PC-9 (cell line): ENCODE measurements at regions of chr1 and their contacts with region 1.

Region 1: GRCh38 chr1:46401964-46402626 is 8.0 kb downstream of the FAAH start:
- DNase-seq: peak; percentile 67 to 88
- H3K4me3 ChIP-seq: no peak overlapping the region
- H3K27ac ChIP-seq: no peak overlapping the region
- H3K4me1 ChIP-seq: peaks cover 8% of the 10 kb centered on the region; the same call in 1 of the 2 replicates
- H3K27me3 ChIP-seq: no peaks in the 10 kb centered on the region
- CTCF ChIP-seq: no peak

Region 2: DNA sequence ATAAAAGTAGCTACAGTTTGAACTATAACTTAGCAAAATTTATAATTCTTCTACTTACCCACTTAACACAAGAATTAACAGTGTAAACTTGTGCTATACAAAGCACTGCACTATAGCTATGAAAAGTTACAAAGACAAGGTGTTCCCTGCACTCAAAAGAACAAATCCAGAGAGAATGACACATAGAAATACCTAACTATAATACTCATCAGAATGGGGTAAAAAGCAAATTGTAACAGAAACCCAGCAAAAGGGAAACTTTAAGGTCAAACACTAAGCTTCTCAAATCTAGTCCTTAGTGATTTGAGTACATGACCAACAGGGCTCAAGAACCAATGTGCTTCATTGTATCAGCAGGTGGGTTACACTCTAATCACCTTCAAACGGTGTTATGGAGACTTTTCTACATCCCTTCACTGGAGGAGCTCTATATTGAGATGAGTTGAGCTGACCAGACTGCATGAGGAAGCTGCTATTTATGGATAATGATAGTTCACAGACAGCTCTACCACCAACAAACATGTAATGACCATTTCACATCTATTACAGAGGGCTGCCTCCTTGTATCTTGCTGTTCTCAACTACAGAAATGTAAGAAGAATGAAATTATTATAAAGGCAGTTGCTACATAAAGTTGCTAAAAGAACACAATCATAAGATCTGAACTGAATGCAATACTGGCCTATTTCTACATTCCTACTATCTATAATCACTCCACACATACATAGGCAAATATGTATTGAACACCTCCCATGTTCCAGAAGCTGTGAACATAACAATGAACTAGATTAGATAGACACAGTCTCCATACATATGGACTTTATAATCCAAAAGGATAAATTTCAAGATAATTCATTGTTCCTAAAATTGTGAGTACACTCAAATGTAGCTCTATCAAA is 317.3 kb before region 1 on chr1:
- CTCF ChIA-PET with region 1: no interaction called
- POLR2A ChIA-PET with region 1: no interaction called
- intact Hi-C with region 1: no loop called
- DNase-seq: peak in 1 of 2 experiments; percentile 70
- H3K4me3 ChIP-seq: peak overlapping the region; percentile 10; the same call in 1 of the 2 replicates
- H3K27ac ChIP-seq: peak overlapping the region; percentile 91
- H3K4me1 ChIP-seq: peaks cover 50% of the 10 kb centered on the region
- H3K27me3 ChIP-seq: no peaks in the 10 kb centered on the region
- CTCF ChIP-seq: no peak

Region 3: GRCh38 chr1:46352363-46352762 is 49.7 kb before region 1 on chr1:
- CTCF ChIA-PET with region 1: interaction called, 17 read pairs
- POLR2A ChIA-PET with region 1: no interaction called
- intact Hi-C with region 1: no loop called
- DNase-seq: no peak
- H3K4me3 ChIP-seq: no peak overlapping the region
- H3K27ac ChIP-seq: no peak overlapping the region
- H3K4me1 ChIP-seq: 0 out of 2 replicates have a peak, but pooled peaks cover 4% of the 10 kb centered on the region
- H3K27me3 ChIP-seq: no peaks in the 10 kb centered on the region
- CTCF ChIP-seq: no peak

Region 4: DNA sequence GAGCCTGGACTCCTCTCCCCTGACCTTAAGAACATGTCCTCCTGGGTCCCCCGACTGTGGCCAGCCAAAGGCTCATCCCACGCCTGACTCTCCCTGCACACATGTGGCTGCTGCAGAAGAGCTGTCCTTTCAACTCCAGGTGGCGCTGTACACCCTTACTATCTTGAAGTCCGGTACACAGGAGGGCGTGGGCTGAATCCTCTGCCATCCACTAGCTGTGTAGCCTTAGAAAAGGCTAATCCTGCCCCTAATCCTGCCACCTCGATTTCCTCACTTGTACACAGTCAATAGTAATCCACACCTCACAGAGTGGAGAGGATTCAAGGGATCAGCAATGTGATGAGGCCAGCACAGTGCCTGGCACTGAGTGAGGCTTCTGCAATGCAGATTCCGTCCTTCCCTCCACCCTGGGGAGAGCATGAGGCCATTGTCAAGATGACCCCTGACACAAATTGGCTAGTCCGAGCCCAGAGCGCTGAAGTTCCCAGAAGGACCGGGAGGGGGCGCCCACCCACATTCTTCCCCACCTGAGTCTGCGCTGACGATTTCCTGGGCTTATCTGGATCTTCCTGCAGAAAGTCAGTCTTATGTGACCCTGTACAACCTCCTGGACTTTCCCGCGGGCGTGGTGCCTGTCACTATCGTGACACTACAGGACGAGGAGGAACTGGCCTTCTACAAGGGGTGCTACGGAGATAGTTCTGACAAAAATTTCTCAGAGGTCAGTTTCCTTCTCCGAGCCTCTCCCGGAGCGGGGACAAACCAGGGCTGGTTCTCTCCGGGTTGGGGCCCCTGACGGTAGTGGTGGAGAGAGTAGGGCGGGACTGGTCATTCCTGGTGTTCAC is 40.4 kb after region 1 on chr1:
- CTCF ChIA-PET with region 1: interaction called, 3 read pairs
- POLR2A ChIA-PET with region 1: no interaction called
- intact Hi-C with region 1: loop called (anchors 2 kb)
- DNase-seq: peak; percentile 61 to 91
- H3K4me3 ChIP-seq: peak overlapping the region; percentile 58
- H3K27ac ChIP-seq: no peak overlapping the region
- H3K4me1 ChIP-seq: 0 out of 2 replicates have a peak, but pooled peaks cover 8% of the 10 kb centered on the region
- H3K27me3 ChIP-seq: peaks cover 5% of the 10 kb centered on the region
- CTCF ChIP-seq: peak; percentile 93

Region 5: DNA sequence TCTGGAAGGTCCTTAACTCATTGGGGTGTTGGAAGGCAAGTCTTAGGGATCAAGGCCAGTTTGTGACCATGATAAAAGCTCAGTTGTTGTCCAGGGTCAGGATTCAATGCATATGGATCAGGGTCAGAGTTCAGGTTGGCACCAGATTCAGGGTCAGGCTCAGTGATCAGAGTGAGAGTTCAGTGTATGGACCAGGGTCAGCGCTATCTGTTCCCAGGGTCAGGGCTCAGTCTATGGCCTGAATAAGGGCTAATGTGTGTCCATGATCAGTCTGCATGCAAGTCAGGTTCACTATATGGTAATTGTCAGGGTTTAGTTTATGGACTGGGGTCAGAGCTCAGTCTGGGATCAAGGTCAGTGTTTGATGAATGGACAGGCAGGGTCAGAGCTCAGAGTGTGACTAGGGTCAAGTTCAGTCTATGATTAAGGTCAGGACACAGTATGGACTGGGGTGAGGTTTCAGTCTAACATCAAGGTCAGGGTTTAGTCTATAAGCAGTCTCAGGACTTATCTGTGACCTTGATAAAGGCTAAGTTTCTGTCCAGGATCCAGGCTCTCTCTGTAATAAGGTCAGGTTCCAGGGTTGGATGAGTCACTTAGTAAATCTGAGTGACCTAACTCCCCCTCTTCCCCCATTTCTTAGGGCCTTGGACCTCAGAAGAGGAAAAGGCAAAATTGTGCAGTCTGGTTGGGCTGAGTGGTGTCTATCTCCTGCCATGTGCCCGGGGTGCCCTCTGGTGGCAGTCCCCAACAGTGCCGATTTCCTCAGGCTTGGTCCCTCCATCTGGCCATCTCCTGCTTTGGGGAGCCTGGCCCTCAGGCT is 125.6 kb after region 1 on chr1:
- CTCF ChIA-PET with region 1: interaction called, 11 read pairs
- POLR2A ChIA-PET with region 1: no interaction called
- intact Hi-C with region 1: loop called (anchors 1 kb)
- DNase-seq: peak; percentile 64 to 87
- H3K4me3 ChIP-seq: no peak overlapping the region
- H3K27ac ChIP-seq: no peak overlapping the region
- H3K4me1 ChIP-seq: peaks cover 28% of the 10 kb centered on the region
- H3K27me3 ChIP-seq: no peaks in the 10 kb centered on the region
- CTCF ChIP-seq: peak; percentile 92

Region 6: GRCh38 chr1:46582972-46583371 is 180.9 kb after region 1 on chr1:
- CTCF ChIA-PET with region 1: interaction called, 14 read pairs
- POLR2A ChIA-PET with region 1: no interaction called
- intact Hi-C with region 1: no loop called
- DNase-seq: no peak
- H3K4me3 ChIP-seq: no peak overlapping the region
- H3K27ac ChIP-seq: no peak overlapping the region
- H3K4me1 ChIP-seq: no peaks in the 10 kb centered on the region
- H3K27me3 ChIP-seq: no peaks in the 10 kb centered on the region
- CTCF ChIP-seq: no peak

Region 7: DNA sequence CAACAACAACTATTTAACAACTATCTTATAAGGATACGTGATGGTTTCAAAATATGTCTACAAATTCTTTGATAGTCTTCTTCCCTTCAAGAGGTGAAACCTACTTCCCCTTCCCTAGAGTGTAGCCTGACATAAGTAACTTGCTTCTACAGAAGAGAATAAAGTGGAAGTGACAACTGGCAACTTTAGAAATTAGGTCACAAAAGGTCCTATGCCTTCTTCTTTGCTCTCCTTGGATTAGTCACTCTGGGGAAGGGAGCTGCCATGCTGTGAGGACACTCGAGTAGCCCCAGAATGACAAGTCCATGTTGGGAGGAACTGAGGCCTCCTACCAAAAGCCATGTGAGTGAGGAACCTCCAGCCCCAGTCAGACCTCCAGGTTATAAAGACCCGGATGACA is 297.6 kb after region 1 on chr1:
- CTCF ChIA-PET with region 1: no interaction called
- POLR2A ChIA-PET with region 1: no interaction called
- intact Hi-C with region 1: no loop called
- DNase-seq: no peak
- H3K4me3 ChIP-seq: no peak overlapping the region
- H3K27ac ChIP-seq: no peak overlapping the region
- H3K4me1 ChIP-seq: no peaks in the 10 kb centered on the region
- H3K27me3 ChIP-seq: no peaks in the 10 kb centered on the region
- CTCF ChIP-seq: no peak